ENCODE measurements at regions of chr2 and their contacts with region 1.

Region 1: DNA sequence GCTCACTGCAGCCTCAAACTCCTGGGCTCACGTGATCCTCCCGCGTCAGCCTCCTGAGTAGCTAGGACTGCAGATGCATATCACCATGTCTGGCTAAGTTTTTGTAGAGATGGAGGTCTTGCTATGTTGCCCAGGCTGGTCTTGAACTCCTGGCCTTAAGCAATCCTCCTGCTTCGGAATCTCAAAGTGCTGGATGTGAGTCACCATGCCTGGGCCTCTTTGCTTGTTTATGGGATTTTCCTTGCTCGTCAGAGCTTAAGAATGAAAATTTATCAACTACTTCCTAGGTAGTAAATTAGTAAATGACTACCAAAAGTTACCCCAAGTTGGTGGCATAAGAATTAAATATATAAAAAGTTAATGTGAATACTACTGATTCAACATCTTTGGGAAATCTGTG is 51.0 kb downstream of the ACTR3 start:
- DNase-seq: no peak
- H3K4me3 ChIP-seq: no peak overlapping the region
- H3K27ac ChIP-seq: no peak overlapping the region
- H3K4me1 ChIP-seq: no peaks in the 10 kb centered on the region
- H3K27me3 ChIP-seq: no peaks in the 10 kb centered on the region
- CTCF ChIP-seq: no peak

Region 2: DNA sequence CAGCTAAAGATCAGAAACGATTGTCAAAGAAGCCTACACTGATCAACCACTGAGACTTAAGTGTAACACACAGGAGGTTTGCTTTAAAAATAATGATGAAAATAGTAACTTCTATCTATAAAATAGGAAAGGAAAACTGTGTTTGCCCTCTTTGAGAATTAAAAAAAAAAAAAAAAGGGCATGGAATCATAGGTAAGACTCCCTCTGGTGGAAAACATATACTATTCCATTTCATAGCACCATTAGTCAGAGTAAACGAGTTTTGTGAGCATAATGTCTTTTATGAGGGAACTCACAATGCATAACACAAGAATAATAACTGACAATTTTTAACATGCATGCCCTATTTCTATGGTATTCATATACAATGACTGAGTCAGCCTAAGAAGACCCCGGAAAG is 220.7 kb before region 1 on chr2:
- CTCF ChIA-PET with region 1: no interaction called
- POLR2A ChIA-PET with region 1: no interaction called
- intact Hi-C with region 1: no loop called
- DNase-seq: peak; percentile 28
- H3K4me3 ChIP-seq: no peak overlapping the region
- H3K27ac ChIP-seq: no peak overlapping the region
- H3K4me1 ChIP-seq: no peaks in the 10 kb centered on the region
- H3K27me3 ChIP-seq: no peaks in the 10 kb centered on the region
- CTCF ChIP-seq: peak; percentile 53

Region 3: GRCh38 chr2:113896791-113897190 is 44.1 kb before region 1 on chr2:
- CTCF ChIA-PET with region 1: no interaction called
- POLR2A ChIA-PET with region 1: no interaction called
- intact Hi-C with region 1: loop called (anchors 5 kb)
- DNase-seq: no peak
- H3K4me3 ChIP-seq: no peak overlapping the region
- H3K27ac ChIP-seq: peak overlapping the region; percentile 91
- H3K4me1 ChIP-seq: peaks cover 69% of the 10 kb centered on the region
- H3K27me3 ChIP-seq: no peaks in the 10 kb centered on the region
- CTCF ChIP-seq: no peak

Measured in A673 (cell line).